K562 (cell line): ENCODE measurements at regions of chr5 and their contacts with region 1.

Region 1: DNA sequence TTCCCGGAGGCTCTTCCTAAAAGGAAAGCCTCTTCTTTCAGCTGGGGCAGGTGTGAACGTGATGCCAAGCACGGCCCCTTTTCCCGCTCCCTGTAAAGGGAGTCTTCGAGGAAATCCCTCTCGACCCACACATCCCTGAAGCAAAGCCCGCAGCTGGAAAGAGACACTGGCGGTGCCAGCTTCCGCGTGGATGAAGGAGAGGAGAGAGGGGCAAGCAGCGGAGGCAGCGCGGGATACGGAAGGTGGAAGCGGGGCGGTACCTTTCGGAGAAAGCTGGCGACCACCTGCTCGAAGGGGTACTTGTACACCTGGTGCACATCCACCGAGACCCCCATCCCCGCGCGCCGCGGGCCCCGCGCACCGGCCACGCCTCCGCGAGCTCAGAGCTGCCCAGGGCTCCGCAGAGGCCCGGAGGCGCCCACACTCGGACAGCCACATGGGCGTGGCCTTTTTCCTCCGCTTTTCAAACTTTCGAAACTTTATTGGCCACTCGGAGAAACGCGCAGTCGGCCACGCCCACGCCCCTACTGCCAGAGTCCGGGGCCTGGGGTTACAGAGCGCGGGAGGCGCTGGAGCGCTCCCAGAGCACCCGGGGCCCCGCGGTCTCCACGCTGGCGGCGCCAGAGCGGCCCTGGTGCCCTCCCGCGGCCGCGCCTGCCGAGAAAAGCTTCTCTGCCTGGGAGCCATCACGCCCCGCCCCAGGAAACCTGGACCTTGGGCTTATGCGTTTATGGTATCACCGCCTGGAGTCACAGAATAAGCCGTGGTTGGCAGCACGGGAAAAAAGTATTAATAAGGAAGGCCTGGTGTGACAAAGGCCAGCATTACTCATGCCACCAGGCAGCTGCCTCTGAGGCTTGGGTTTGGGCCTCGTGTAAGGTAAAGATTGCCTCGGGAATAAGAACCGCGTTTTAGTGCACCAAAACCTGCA is at the start of gene PRELID2:
- DNase-seq: peak; percentile 90 to 97 (median 90)
- ATAC-seq: peak; percentile 95
- H3K4me3 ChIP-seq: peak within 1 kb of the TSS; percentile 80
- H3K27ac ChIP-seq: peak within 1 kb of the TSS; percentile 87
- H3K4me1 ChIP-seq: peaks cover 14 to 54% of the 10 kb centered on the region in 2 experiments
- H3K27me3 ChIP-seq: no peaks in the 10 kb centered on the region
- CTCF ChIP-seq: peak; percentile 29 to 70 (median 55); a peak in 5 of 6 replicates
- EP300 ChIP-seq: peak; percentile 44; the same call in 1 of the 2 replicates
- POLR2A ChIP-seq: peak; percentile 84
- RAD21 ChIP-seq: peak; percentile 48 to 56
- polyA plus RNA-seq, gene PRELID2: 6.4 to 7.8 TPM

Region 2: DNA sequence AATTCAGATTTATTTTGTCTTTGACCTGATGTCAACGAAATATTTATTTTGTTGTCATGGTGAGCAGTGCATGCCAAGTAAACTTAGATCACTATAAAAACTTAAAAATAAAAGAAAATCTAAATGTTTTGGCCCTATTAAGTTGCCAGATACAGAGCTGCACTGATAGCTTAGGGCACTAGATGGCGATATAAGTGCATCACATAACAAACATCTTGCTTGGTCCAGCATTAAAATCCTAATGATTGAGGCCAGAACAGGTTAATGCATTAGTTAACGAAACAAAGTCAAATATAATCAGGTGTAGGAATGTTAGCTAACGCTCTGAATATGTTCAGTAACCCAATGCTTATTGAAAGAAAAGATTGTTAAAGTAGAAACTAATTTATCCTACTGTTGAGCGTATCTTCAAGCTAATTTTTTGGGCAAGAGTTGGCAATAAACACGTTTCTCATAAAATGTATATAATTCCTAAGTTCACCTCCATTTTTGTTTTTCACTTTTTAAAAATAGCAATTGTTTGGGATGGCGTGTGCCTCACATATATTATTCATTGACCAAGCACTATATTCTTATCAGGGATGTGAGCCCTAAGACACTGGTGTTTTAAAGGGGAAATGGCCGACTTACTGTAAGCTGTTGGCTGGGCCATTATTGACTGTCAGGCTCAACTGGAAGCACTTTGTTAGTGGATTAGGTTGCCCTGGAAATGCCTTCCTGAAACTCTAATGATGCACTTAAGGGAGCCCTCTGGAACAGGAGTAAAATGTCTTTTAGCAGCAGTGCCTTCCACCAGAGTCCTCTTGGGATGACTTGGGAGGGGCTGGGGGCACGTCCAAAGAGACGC is 1631.2 kb before region 1 on chr5:
- CTCF ChIA-PET with region 1: no interaction called
- POLR2A ChIA-PET with region 1: no interaction called
- in situ Hi-C with region 1: no loop called
- intact Hi-C with region 1: loop called (anchors 5 kb)
- DNase-seq: peak; percentile 26 to 67 (median 32)
- ATAC-seq: peak; percentile 88
- H3K4me3 ChIP-seq: no peak overlapping the region
- H3K27ac ChIP-seq: no peak overlapping the region
- H3K4me1 ChIP-seq: peaks cover 0 to 4% of the 10 kb centered on the region in 2 experiments; a peak in 2 of 5 replicates
- H3K27me3 ChIP-seq: peaks cover 3 to 6% of the 10 kb centered on the region in 2 experiments; a peak in 2 of 5 replicates
- CTCF ChIP-seq: peak; percentile 59 to 82 (median 77)
- EP300 ChIP-seq: no peak
- POLR2A ChIP-seq: no peak
- RAD21 ChIP-seq: peak; percentile 80 to 87

Region 3: DNA sequence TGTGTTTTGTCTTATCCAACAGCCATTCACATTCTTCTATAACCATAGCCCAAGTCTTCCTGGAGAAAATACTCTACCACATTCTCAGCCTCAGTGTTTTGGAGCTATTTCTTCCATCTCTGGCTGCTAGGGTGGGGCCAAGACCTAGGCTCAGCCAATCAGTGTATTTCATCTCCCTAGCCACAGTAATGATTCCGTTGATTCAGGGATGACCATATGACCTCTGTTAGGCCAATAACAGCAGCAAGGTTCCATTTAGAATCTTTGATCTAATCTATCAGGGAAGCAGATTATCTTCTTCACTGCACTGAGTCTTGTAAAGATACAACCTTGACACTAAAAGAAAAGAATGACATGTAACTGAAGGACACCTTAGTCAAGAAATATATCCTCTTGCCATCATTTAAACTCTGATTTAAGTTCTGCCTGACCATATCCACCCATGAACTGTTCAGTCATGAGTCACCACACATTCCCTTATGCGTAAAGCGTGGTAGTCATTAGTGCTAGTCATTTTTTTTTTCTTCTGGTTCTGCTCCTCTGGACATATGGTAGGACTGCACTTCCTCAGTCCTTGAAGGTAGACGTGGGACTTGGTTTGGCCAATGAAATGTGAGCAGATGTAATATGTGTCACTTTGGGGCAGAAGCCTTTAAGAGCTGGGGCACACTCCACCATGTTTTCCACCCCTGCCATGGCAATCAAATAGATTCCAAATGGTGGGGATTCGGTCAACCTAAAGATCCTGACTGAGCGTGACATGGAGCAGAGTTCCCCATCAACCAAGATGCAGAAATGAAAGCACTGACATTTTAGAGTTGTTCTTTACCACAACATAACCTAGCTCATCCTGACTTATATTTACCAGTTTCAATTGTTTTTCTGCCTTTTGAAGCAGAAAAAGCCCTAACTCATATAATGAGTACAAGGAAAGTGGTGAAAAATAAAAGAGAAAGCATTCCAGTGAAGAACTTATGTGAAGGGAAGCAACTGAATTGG is 12.6 kb after region 1 on chr5:
- CTCF ChIA-PET with region 1: no interaction called
- POLR2A ChIA-PET with region 1: interaction called, 19 read pairs
- in situ Hi-C with region 1: no loop called
- intact Hi-C with region 1: no loop called
- DNase-seq: peak in 3 of 4 experiments; percentile 34 to 41 (median 35)
- ATAC-seq: peak; percentile 64
- H3K4me3 ChIP-seq: no peak overlapping the region
- H3K27ac ChIP-seq: no peak overlapping the region; the same call in 2 of the 3 replicates
- H3K4me1 ChIP-seq: peaks cover 1 to 32% of the 10 kb centered on the region in 2 experiments; a peak in 3 of 5 replicates
- H3K27me3 ChIP-seq: no peaks in the 10 kb centered on the region
- CTCF ChIP-seq: no peak
- EP300 ChIP-seq: no peak
- POLR2A ChIP-seq: no peak
- RAD21 ChIP-seq: no peak

Region 4: DNA sequence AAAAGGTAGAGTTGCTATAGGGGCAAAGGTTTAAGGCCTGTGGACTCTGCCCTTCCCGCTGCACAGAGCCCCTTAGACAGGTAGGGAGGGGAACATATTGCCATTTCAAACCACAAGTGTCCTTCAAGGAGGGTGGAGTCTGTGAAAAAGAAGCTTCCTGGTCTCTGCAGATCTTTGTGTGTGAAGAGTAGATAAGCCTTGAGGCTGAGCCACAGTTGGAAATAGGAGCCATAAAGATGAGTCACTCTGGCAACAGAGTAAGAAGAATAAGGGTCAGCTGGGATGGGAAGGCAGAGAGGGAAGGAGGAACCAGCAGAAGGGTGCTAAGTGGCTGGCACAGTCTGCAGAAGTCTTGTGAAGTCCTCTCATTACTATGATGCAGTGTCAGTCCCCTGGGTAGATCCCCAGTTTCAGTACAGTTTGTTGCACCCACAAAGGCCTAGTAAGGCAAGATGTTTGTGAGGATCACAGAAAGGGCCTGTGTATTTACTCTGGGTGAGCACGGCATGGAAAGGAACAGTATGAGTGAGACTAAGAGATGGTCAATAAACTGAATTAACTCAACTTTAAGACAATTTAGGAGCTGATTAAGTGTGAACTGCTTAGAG is 19.6 kb after region 1 on chr5:
- CTCF ChIA-PET with region 1: no interaction called
- POLR2A ChIA-PET with region 1: interaction called, 19 read pairs
- in situ Hi-C with region 1: no loop called
- intact Hi-C with region 1: loop called (anchors 2 kb)
- DNase-seq: peak; percentile 86 to 96 (median 88)
- ATAC-seq: peak; percentile 93
- H3K4me3 ChIP-seq: no peak overlapping the region
- H3K27ac ChIP-seq: peak overlapping the region; percentile 93
- H3K4me1 ChIP-seq: peaks cover 22 to 55% of the 10 kb centered on the region in 2 experiments
- H3K27me3 ChIP-seq: no peaks in the 10 kb centered on the region
- CTCF ChIP-seq: 0 out of 6 replicates have a peak, but pooled peaks of 1 of the 3 experiments have one; percentile 7
- EP300 ChIP-seq: peak; percentile 98
- POLR2A ChIP-seq: peak; percentile 68; the same call in 1 of the 2 replicates
- RAD21 ChIP-seq: peak; percentile 12 to 28; a peak in 1 of 4 replicates

Region 5: GRCh38 chr5:145991044-145991575 is 155.9 kb after region 1 on chr5:
- CTCF ChIA-PET with region 1: no interaction called
- POLR2A ChIA-PET with region 1: no interaction called
- in situ Hi-C with region 1: no loop called
- intact Hi-C with region 1: no loop called
- DNase-seq: no peak
- ATAC-seq: no peak
- H3K4me3 ChIP-seq: no peak overlapping the region
- H3K27ac ChIP-seq: no peak overlapping the region
- H3K4me1 ChIP-seq: no peaks in the 10 kb centered on the region
- H3K27me3 ChIP-seq: no peaks in the 10 kb centered on the region
- CTCF ChIP-seq: no peak
- EP300 ChIP-seq: no peak
- POLR2A ChIP-seq: no peak
- RAD21 ChIP-seq: no peak

Region 6: DNA sequence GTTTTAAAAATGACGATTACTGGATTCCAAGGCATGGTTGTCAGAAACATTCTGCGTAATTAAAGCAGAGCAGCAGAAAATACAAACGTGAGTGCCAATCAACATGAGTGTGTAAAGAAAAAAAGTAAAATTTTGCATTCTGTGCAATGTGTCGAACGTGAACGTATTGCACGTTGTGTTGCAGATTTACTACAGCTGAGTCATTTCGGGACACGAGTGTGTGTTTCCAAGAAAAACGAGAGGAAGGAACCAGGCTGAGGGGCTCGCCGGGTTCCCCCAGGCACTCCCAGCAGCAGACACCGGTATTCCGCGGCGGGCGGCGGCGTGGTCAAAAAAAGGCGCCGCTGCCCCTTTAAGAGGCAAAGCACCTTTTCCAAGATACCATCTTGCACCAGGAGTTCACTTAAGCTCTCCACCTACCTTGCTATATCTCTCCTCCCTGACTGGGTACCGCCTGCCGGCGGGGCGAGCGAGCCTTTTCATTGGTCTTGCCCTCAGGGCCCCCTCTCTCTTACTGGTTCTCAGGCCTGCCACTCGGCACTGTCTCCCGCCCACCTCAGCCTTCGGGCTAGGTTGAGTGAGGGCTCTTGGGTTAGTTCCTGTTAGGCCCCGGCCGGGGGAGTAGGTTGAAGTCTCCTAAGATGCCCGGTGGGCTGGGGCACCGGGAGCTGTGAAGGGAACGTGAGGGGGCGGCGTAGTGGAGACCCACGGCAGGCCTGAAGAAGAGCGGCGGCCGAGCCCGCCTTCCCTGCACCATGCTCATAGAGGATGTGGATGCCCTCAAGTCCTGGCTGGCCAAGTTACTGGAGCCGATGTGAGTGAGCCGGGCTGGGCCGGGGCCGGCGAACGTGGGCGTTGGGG is 368.1 kb after region 1 on chr5 and contains the start of gene RBM27:
- CTCF ChIA-PET with region 1: no interaction called
- POLR2A ChIA-PET with region 1: no interaction called
- in situ Hi-C with region 1: loop called (anchors 10 kb)
- intact Hi-C with region 1: no loop called
- DNase-seq: peak; percentile 98 to 100 (median 100)
- ATAC-seq: peak; percentile 98
- H3K4me3 ChIP-seq: peak within 1 kb of the TSS; percentile 62
- H3K27ac ChIP-seq: peak within 1 kb of the TSS; percentile 88
- H3K4me1 ChIP-seq: peaks cover 17% of the 10 kb centered on the region in 2 experiments; a peak in 4 of 5 replicates
- H3K27me3 ChIP-seq: no peaks in the 10 kb centered on the region
- CTCF ChIP-seq: no peak
- EP300 ChIP-seq: 0 out of 2 replicates have a peak, but pooled peaks have one; percentile 1
- POLR2A ChIP-seq: peak; percentile 88
- RAD21 ChIP-seq: peak in 1 of 2 experiments; percentile 4; a peak in 1 of 4 replicates
- polyA plus RNA-seq, gene RBM27: 5.3 to 8.3 TPM